ENCODE measurements at regions of chr11 and their contacts with region 1.

Region 1: GRCh38 chr11:63871962-63872799 is 33.3 kb downstream of the MARK2 start:
- DNase-seq: peak; percentile 77
- ATAC-seq: peak; percentile 99
- H3K4me3 ChIP-seq: no peak overlapping the region
- H3K27ac ChIP-seq: no peak overlapping the region
- H3K4me1 ChIP-seq: peaks cover 36% of the 10 kb centered on the region
- H3K27me3 ChIP-seq: no peaks in the 10 kb centered on the region
- CTCF ChIP-seq: peak; percentile 54 to 78 (median 57); a peak in 5 of 6 replicates
- EP300 ChIP-seq: no peak
- POLR2A ChIP-seq: no peak
- RAD21 ChIP-seq: peak; percentile 73

Region 2: DNA sequence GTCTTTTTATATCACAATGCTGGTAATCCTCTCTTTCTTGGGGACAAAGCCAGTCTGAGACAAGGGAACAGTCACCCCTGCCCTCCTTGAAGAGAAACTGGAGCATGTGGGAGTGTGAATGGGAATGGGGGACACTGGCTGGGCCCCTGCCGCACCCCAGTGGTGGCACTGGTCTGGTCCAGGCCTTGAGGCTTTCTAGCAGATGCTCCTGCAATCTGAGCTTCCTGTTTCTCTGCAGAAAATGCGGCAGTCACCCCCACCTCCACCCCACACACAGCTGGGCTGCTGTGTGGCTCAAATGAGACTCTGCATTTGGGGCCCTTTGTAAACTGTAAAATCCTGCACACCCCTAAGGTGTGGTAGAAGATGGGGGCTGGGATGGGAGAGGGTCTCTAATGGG is 39.8 kb before region 1 on chr11:
- CTCF ChIA-PET with region 1: interaction called, 60 read pairs
- POLR2A ChIA-PET with region 1: interaction called, 4 read pairs
- RAD21 ChIA-PET with region 1: interaction called, 52 read pairs
- SMC1A ChIA-PET with region 1: interaction called, 153 read pairs
- in situ Hi-C with region 1: no loop called
- intact Hi-C with region 1: no loop called
- DNase-seq: no peak
- ATAC-seq: peak; percentile 31; the same call in 2 of the 3 replicates
- H3K4me3 ChIP-seq: no peak overlapping the region
- H3K27ac ChIP-seq: no peak overlapping the region
- H3K4me1 ChIP-seq: peaks cover 7% of the 10 kb centered on the region
- H3K27me3 ChIP-seq: no peaks in the 10 kb centered on the region
- CTCF ChIP-seq: no peak
- EP300 ChIP-seq: no peak
- POLR2A ChIP-seq: peak; percentile 21; the same call in 1 of the 2 replicates
- RAD21 ChIP-seq: no peak

Region 3: GRCh38 chr11:63845303-63845702 is 26.9 kb before region 1 on chr11:
- CTCF ChIA-PET with region 1: interaction called, 60 read pairs
- POLR2A ChIA-PET with region 1: interaction called, 5 read pairs
- RAD21 ChIA-PET with region 1: interaction called, 52 read pairs
- SMC1A ChIA-PET with region 1: interaction called, 153 read pairs
- in situ Hi-C with region 1: no loop called
- intact Hi-C with region 1: loop called (anchors 1 kb)
- DNase-seq: no peak
- ATAC-seq: no peak
- H3K4me3 ChIP-seq: no peak overlapping the region
- H3K27ac ChIP-seq: no peak overlapping the region
- H3K4me1 ChIP-seq: peaks cover 10% of the 10 kb centered on the region
- H3K27me3 ChIP-seq: no peaks in the 10 kb centered on the region
- CTCF ChIP-seq: no peak
- EP300 ChIP-seq: no peak
- POLR2A ChIP-seq: no peak
- RAD21 ChIP-seq: no peak

Region 4: DNA sequence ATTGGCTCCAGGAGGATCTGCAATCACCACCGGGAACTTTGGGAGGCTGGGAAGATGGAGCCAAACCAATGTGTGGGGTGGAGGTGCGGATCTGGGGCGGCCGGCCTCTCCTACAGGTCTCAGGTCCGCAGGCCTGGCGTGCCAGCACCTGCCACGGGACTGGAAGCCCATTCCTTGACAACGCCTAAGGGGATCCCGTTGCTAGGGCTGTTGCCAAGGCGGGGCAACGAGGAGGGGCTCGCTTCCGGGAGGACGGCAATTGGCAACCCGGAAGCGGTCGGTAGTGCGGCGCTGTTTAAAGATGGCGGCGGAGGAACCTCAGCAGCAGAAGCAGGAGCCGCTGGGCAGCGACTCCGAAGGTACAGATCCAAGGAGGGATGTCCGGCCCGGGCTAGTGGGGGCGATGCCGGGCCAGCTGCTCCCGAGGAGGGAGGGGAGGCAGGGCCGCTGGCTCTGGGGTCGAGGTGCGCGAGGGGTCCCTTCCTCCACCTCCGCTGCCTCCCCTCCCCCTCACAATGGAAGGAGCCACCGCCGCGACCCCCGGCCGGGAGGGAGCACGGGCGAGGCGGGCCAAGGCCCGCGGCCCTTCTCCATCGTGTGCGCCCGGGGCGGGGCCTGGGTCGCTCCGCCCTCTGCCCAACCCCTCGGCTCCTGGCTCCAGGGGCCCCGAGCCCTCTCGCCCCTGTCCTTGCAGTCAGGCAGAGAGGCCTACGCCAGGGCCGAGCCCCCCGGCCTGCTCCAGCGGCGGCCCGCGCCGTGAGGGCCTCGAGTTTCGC is 114.2 kb after region 1 on chr11 and contains the start of gene OTUB1:
- CTCF ChIA-PET with region 1: no interaction called
- POLR2A ChIA-PET with region 1: no interaction called
- RAD21 ChIA-PET with region 1: no interaction called
- SMC1A ChIA-PET with region 1: no interaction called
- in situ Hi-C with region 1: no loop called
- intact Hi-C with region 1: no loop called
- DNase-seq: peak; percentile 47
- ATAC-seq: peak; percentile 96
- H3K4me3 ChIP-seq: peak within 1 kb of the TSS; percentile 88
- H3K27ac ChIP-seq: peak within 1 kb of the TSS; percentile 68
- H3K4me1 ChIP-seq: peaks cover 22% of the 10 kb centered on the region
- H3K27me3 ChIP-seq: no peaks in the 10 kb centered on the region
- CTCF ChIP-seq: no peak
- EP300 ChIP-seq: no peak
- POLR2A ChIP-seq: peak; percentile 96
- RAD21 ChIP-seq: no peak
- polyA plus RNA-seq, gene OTUB1: 125 to 225 TPM

Measured in GM12878 (cell line).